Activated T-helper 2 cell treated with anti-CD3 and anti-CD28 coated beads, Interferon-gamma antibody, Interleukin-2, Interleukin-4, amounts not matched to agents 10 μg/mL and 5 μg/mL and 100 μg/mL, durations not matched to agents 14 hours and 24 hours and 36 hours (primary cell): ENCODE measurements at regions of chr3 and their contacts with region 1.

Region 1: DNA sequence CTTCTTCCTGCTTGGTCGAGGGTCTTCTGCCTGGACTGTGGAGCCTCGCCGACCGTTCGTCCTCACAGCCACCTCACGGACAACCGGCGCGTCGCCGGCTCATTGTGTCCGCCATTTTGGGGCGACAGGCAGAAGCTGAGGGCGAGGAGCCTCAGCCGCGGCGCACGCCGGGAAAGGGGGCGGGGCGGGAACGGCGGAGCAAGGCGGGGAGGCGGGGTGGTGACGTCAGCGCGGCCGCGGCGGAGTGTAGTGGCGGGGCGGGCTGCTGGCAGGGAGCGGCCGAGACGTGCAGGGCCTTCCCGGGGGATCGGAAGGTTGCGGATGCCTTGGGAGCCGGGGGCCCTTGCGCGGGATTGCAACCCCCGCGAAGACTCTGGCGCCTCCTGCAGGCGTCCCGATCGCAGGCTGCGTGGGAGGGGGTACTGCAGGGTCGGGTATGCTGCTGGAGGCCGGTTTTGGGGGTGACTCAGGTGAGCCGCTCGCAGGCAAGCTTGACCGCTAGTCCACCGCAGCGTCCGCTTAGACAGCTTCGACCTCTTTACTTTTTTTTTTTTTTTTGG is at the start of gene WDR82:
- DNase-seq: peak; percentile 95
- H3K4me3 Mint-ChIP-seq: peak within 1 kb of the TSS; percentile 98
- H3K27ac Mint-ChIP-seq: peak within 1 kb of the TSS; percentile 99
- H3K4me1 Mint-ChIP-seq: peaks cover 57% of the 10 kb centered on the region
- H3K27me3 Mint-ChIP-seq: no peaks in the 10 kb centered on the region
- total RNA-seq, gene WDR82: 101 and 103 TPM in 2 replicates

Region 2: DNA sequence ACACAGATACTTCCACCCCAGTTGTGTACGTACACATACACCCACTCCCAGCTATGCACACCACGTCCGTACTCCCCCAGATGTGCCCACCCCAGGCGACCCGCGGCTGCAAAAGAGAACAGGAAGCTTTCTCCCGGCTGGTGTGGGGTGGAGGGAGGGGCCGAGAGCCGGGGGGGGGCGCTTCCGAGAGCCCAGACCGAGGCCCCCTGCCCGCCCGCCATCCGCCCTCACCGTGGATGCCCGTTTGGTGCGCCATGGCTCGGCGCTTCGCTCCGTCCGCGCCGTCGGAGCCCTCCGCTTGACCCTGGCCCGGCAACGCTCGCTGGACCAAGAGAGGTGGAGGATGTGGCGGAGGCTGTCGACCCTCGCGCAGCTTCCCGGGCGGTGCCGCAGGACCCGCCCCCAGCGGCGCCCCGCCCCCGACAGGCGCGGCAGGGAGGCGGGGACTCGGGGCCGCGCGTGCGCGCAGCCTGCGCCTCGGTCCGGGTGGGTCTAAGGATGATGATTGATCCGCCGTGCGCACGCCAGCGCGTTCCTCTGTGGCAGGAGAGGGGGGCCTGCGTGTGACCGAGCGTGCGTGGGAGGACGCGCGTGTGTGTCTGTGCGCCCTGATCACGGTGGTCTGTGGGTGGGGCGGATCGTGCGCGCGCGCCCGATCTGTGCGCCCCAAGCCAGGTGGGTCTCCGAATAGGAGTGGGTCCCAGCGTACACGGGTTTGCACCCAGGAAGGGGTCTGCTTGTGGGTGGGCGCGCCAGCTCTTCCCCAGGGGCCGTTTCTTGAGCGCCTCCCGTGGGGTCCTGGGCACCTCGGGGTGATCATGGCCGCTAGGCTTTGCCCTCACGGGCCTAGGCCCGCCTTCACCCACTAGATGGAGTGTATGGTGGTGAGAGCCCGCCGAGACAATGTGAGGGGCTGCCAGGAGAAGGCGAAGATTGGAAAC is 39.6 kb before region 1 on chr3 and contains the start of gene TWF2:
- intact Hi-C with region 1: loop called (anchors 1 kb)
- DNase-seq: peak; percentile 83
- H3K4me3 Mint-ChIP-seq: peak within 1 kb of the TSS; percentile 96
- H3K27ac Mint-ChIP-seq: peak within 1 kb of the TSS; percentile 99
- H3K4me1 Mint-ChIP-seq: peaks cover 51% of the 10 kb centered on the region
- H3K27me3 Mint-ChIP-seq: no peaks in the 10 kb centered on the region
- total RNA-seq, gene TWF2: 89.7 and 91.1 TPM in 2 replicates

Region 3: GRCh38 chr3:52253314-52254304 is 25.0 kb before region 1 on chr3:
- intact Hi-C with region 1: loop called (anchors 1 kb)
- DNase-seq: peak; percentile 83
- H3K4me3 Mint-ChIP-seq: peak overlapping the region; percentile 77
- H3K27ac Mint-ChIP-seq: peak overlapping the region; percentile 98
- H3K4me1 Mint-ChIP-seq: peaks cover 69% of the 10 kb centered on the region
- H3K27me3 Mint-ChIP-seq: no peaks in the 10 kb centered on the region

Region 4: DNA sequence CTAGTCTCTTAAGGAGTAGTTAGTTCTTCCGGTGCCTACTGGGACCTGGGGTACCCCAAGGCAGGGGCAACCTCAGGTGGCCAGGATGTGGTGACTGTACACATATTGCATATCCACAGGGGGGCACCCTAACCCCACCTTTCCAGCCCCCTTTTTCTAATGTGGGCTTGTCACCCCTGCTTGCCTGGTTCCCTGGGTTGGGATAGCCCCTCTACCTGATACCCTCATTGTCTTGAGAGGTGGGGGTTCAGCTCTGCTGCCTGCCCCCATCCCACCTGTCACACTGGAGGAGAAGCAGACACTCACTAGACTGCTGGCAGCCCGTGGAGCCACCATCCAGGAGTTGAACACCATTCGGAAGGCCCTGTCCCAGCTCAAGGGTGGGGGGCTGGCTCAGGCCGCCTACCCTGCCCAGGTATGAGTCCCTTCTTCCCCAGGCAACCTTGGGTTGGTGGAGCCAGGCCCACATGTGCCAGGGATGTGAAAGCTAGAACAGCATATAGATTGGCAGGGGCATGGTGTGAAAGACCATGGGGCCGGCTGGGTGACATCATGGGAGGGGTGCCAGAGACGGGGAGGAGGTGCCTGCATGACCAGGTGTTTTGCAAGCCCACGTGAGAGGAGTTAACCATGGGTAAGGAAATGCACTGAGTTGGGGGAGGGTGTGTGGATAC is 13.1 kb after region 1 on chr3:
- intact Hi-C with region 1: loop called (anchors 1 kb)
- DNase-seq: no peak
- H3K4me3 Mint-ChIP-seq: no peak overlapping the region
- H3K27ac Mint-ChIP-seq: no peak overlapping the region
- H3K4me1 Mint-ChIP-seq: peaks cover 16% of the 10 kb centered on the region
- H3K27me3 Mint-ChIP-seq: no peaks in the 10 kb centered on the region

Region 5: GRCh38 chr3:52339612-52340011 is 61.0 kb after region 1 on chr3:
- intact Hi-C with region 1: loop called (anchors 10 kb)
- DNase-seq: peak; percentile 37
- H3K4me3 Mint-ChIP-seq: no peak overlapping the region
- H3K27ac Mint-ChIP-seq: no peak overlapping the region
- H3K4me1 Mint-ChIP-seq: peaks cover 7% of the 10 kb centered on the region
- H3K27me3 Mint-ChIP-seq: no peaks in the 10 kb centered on the region